ENCODE measurements at regions of chr20 and their contacts with region 1.

Region 1: GRCh38 chr20:45971675-45972499 is at the start of gene ZNF335:
- DNase-seq: peak; percentile 90 to 98 (median 94)
- ATAC-seq: peak; percentile 83
- H3K4me3 ChIP-seq: peak within 1 kb of the TSS; percentile 100
- H3K4me3 Mint-ChIP-seq: peak within 1 kb of the TSS; percentile 90
- H3K27ac ChIP-seq: peak within 1 kb of the TSS; percentile 100
- H3K27ac Mint-ChIP-seq: peak within 1 kb of the TSS; percentile 100
- H3K4me1 ChIP-seq: peaks cover 27% of the 10 kb centered on the region
- H3K4me1 Mint-ChIP-seq: peaks cover 24% of the 10 kb centered on the region
- H3K27me3 ChIP-seq: no peaks in the 10 kb centered on the region
- H3K27me3 Mint-ChIP-seq: no peaks in the 10 kb centered on the region
- CTCF ChIP-seq: no peak
- total RNA-seq, gene ZNF335: 90.9 to 96.1 TPM

Region 2: DNA sequence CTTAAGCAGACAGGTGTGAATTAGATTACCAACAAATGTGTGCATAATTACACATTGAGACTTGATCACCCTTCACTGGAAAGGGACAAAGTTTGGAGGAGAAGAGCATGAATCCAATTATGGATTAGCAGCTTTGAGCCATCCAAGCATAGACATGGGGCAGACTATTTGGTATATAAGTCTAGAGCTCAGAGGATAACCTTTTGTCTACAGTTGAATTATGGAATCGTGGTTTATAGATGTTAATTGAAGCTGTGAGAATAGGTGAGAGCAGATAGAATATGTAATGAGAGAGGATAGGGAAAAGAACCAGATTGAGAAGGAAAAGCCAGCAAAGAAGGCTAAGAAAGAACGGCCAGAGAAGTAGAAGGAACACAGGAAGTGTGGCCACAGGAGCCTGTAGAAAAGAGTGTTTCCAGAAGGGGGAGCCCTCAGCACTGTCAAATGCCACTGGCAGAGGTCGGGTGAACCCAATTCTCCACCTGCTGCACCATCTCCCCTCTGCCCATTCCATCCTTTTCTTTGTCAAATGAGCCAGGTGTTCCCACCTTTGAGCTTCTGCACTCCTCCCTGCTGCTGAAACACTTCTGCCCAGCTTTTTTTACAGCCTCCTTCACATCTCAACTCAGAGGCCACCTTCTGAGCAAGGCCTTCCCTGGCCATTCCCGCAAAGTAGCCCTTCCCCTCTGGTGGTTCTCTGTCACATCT is 172.8 kb before region 1 on chr20:
- CTCF ChIA-PET with region 1: interaction called, 9 read pairs
- POLR2A ChIA-PET with region 1: interaction called, 4 read pairs
- intact Hi-C with region 1: loop called (anchors 2 to 5 kb)
- DNase-seq: peak; percentile 19 to 78 (median 66)
- ATAC-seq: peak; percentile 96
- H3K4me3 ChIP-seq: no peak overlapping the region
- H3K4me3 Mint-ChIP-seq: no peak overlapping the region
- H3K27ac ChIP-seq: peak overlapping the region in 1 of 2 experiments; percentile 31
- H3K27ac Mint-ChIP-seq: peak overlapping the region; percentile 61
- H3K4me1 ChIP-seq: peaks cover 9% of the 10 kb centered on the region
- H3K4me1 Mint-ChIP-seq: peaks cover 11% of the 10 kb centered on the region
- H3K27me3 ChIP-seq: no peaks in the 10 kb centered on the region
- H3K27me3 Mint-ChIP-seq: no peaks in the 10 kb centered on the region
- CTCF ChIP-seq: peak; percentile 73

Region 3: GRCh38 chr20:45890985-45891983 is 80.6 kb before region 1 on chr20 and contains the starts of genes CTSA and NEURL2:
- CTCF ChIA-PET with region 1: interaction called, 10 read pairs
- POLR2A ChIA-PET with region 1: interaction called, 31 read pairs
- intact Hi-C with region 1: loop called (anchors 1 to 2 kb)
- DNase-seq: peak; percentile 53 to 91 (median 84)
- ATAC-seq: peak; percentile 70
- H3K4me3 ChIP-seq: peak within 1 kb of the TSS; percentile 89 to 99
- H3K4me3 Mint-ChIP-seq: peak within 1 kb of the TSS; percentile 93
- H3K27ac ChIP-seq: peak within 1 kb of the TSS; percentile 46 to 60
- H3K27ac Mint-ChIP-seq: peak within 1 kb of the TSS; percentile 90
- H3K4me1 ChIP-seq: peaks cover 24% of the 10 kb centered on the region
- H3K4me1 Mint-ChIP-seq: peaks cover 35% of the 10 kb centered on the region
- H3K27me3 ChIP-seq: no peaks in the 10 kb centered on the region
- H3K27me3 Mint-ChIP-seq: no peaks in the 10 kb centered on the region
- CTCF ChIP-seq: no peak
- total RNA-seq, gene CTSA: 52.8 to 64.2 TPM
- total RNA-seq, gene NEURL2: 1.6 to 1.7 TPM

Region 4: GRCh38 chr20:45953672-45954071 is 18.2 kb before region 1 on chr20:
- CTCF ChIA-PET with region 1: interaction called, 18 read pairs
- POLR2A ChIA-PET with region 1: interaction called, 9 read pairs
- intact Hi-C with region 1: no loop called
- DNase-seq: peak in 2 of 9 experiments; percentile 3 to 17
- ATAC-seq: no peak
- H3K4me3 ChIP-seq: no peak overlapping the region
- H3K4me3 Mint-ChIP-seq: no peak overlapping the region
- H3K27ac ChIP-seq: no peak overlapping the region
- H3K27ac Mint-ChIP-seq: no peak overlapping the region
- H3K4me1 ChIP-seq: no peaks in the 10 kb centered on the region
- H3K4me1 Mint-ChIP-seq: peaks cover 3% of the 10 kb centered on the region
- H3K27me3 ChIP-seq: no peaks in the 10 kb centered on the region
- H3K27me3 Mint-ChIP-seq: no peaks in the 10 kb centered on the region
- CTCF ChIP-seq: no peak

Region 5: DNA sequence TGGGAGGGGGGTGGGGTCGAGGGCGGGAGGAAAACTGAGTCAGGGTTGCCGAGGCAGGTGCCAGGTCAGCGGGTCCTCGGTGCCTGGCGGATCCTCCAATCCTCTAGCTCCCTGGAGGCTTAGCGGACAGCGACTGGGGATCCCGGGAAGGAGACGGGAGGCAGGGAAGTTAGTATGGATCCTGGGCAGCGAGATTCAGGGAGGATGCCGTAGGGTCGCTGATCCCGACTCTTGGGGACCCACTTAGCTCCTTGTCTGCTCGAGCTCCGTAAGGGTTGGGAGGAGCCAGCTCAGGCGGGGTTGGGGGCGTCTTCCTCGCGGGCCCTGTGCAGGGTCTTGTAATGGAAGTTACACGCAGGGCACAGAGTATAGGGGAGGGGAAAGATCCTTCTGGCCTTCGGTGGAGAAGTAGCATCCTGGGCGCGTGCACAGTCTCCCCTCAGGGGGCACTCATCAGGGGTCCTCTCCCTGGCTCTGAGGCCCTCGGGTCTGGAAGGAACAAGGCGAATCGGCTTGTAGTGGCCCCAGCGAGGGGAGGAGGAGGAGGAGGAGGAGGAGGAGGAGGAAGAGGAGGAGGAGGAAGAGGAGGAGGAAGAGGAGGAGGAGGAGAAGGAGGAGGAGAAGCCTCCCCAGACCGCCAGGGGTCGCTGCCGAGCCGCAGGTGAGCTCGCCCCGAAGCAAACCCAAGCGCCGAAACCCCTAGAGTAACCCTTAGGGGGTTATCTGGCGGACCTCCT is 50.7 kb after region 1 on chr20:
- CTCF ChIA-PET with region 1: interaction called, 3 read pairs
- POLR2A ChIA-PET with region 1: no interaction called
- intact Hi-C with region 1: loop called (anchors 1 to 2 kb)
- DNase-seq: peak; percentile 47 to 89 (median 79)
- ATAC-seq: peak; percentile 62
- H3K4me3 ChIP-seq: peak overlapping the region; percentile 22 to 42
- H3K4me3 Mint-ChIP-seq: peak overlapping the region; percentile 76
- H3K27ac ChIP-seq: no peak overlapping the region
- H3K27ac Mint-ChIP-seq: no peak overlapping the region
- H3K4me1 ChIP-seq: peaks cover 14% of the 10 kb centered on the region
- H3K4me1 Mint-ChIP-seq: peaks cover 20% of the 10 kb centered on the region
- H3K27me3 ChIP-seq: peaks cover 17 to 18% of the 10 kb centered on the region in 2 experiments
- H3K27me3 Mint-ChIP-seq: peaks cover 63% of the 10 kb centered on the region
- CTCF ChIP-seq: peak; percentile 58

Region 6: DNA sequence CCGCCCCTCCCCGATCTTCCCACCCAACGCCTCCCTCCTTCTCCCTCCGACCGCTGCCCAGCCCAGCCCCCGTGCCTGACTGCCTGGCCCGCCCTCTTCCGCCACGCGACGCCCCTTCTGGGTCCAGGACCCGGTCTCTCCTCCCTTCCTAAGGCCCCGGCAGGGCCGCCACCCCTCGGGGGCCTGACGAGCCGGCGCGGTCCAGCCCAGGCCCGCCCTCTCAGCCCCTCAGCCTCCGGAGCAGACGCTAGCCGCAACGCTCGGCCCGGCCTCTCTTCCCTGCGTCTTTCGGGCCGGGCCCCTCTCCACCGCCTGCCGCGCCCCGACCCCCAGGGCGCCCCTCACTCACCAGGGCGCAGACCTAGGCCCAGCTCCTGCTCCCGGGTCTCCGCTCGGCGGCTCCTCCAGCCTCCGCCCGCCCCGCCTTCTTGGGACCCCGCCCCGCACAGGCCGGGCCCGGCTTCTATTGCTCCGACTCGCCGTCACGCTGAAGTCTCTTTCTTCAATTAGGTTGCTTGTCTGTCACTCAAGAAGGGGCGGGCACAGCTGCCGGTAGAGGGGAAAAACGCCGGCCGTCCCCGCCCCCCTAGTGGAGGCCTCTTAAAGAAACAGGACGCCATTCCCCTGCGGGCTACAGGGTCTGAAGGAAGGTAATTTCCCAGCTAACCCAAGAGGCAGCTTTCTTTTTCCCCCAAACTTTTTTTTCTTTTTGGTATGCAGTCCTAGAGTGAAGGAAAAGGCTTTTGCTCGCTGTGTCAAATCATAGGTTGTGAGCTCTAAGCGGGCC is 434.5 kb after region 1 on chr20 and contains the start of gene ELMO2:
- CTCF ChIA-PET with region 1: no interaction called
- POLR2A ChIA-PET with region 1: no interaction called
- intact Hi-C with region 1: loop called (anchors 1 to 2 kb)
- DNase-seq: peak; percentile 89 to 98 (median 96)
- ATAC-seq: peak; percentile 90
- H3K4me3 ChIP-seq: peak within 1 kb of the TSS; percentile 89 to 91
- H3K4me3 Mint-ChIP-seq: peak within 1 kb of the TSS; percentile 99
- H3K27ac ChIP-seq: peak within 1 kb of the TSS; percentile 72 to 82
- H3K27ac Mint-ChIP-seq: peak within 1 kb of the TSS; percentile 98
- H3K4me1 ChIP-seq: peaks cover 53% of the 10 kb centered on the region
- H3K4me1 Mint-ChIP-seq: peaks cover 70% of the 10 kb centered on the region
- H3K27me3 ChIP-seq: no peaks in the 10 kb centered on the region
- H3K27me3 Mint-ChIP-seq: no peaks in the 10 kb centered on the region
- CTCF ChIP-seq: no peak
- total RNA-seq, gene ELMO2: 59.2 to 62.8 TPM